Spleen (tissue), 13 donors: ENCODE measurements at regions of chr11 and their contacts with region 1.

Region 1: GRCh38 chr11:75547580-75548058 is 14.4 kb upstream of the SERPINH1 start:
- DNase-seq: no peak
- H3K4me3 ChIP-seq: no peak overlapping the region
- H3K27ac ChIP-seq: no peak overlapping the region
- H3K4me1 ChIP-seq: peaks cover 0 to 17% (median 5%) of the 10 kb centered on the region in 6 donors
- H3K27me3 ChIP-seq: peaks cover 0 to 8% (median 0%) of the 10 kb centered on the region in 7 donors
- CTCF ChIP-seq: peak; percentile 28 to 84 (median 73)
- POLR2A ChIP-seq: no peak

Region 2: GRCh38 chr11:75319035-75319877 is 228.4 kb before region 1 on chr11:
- intact Hi-C with region 1: no loop called
- DNase-seq: no peak
- H3K4me3 ChIP-seq: no peak overlapping the region
- H3K27ac ChIP-seq: peak overlapping the region in 2 of 8 donors; percentile 12 to 38
- H3K4me1 ChIP-seq: peaks cover 2 to 84% (median 35%) of the 10 kb centered on the region in 6 donors
- H3K27me3 ChIP-seq: no peaks in the 10 kb centered on the region
- CTCF ChIP-seq: no peak
- POLR2A ChIP-seq: no peak

Region 3: GRCh38 chr11:75465701-75466531 is 81.7 kb before region 1 on chr11:
- intact Hi-C with region 1: no loop called
- DNase-seq: peak; percentile 79
- H3K4me3 ChIP-seq: no peak overlapping the region
- H3K27ac ChIP-seq: peak overlapping the region; percentile 7 to 89 (median 78)
- H3K4me1 ChIP-seq: peaks cover 24 to 97% (median 66%) of the 10 kb centered on the region in 6 donors
- H3K27me3 ChIP-seq: no peaks in the 10 kb centered on the region
- CTCF ChIP-seq: no peak
- POLR2A ChIP-seq: no peak

Region 4: DNA sequence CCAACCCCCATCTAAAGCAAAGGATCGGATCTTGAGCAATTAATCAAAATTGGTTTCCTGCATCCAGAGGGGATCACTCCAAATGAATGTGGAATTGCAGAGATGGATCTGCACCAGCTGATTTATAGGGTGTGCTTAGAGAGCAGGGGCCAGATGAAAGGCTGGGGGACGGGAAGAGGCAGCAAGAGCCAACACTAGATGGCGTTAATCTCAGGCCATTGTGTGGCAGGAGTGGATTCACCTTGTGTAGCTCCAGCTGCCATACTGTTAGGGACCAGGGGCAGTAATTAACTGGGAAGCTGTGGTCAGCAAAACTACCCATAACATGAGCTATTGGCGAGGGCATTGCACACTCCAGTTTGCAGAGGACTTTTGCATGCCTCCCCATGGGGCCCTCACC is 50.0 kb after region 1 on chr11:
- intact Hi-C with region 1: loop called (anchors 10 kb)
- DNase-seq: no peak
- H3K4me3 ChIP-seq: no peak overlapping the region
- H3K27ac ChIP-seq: no peak overlapping the region
- H3K4me1 ChIP-seq: peaks cover 0 to 22% (median 0%) of the 10 kb centered on the region in 6 donors
- H3K27me3 ChIP-seq: no peaks in the 10 kb centered on the region
- CTCF ChIP-seq: peak in 5 of 11 experiments; percentile 22 to 31 (median 31)
- POLR2A ChIP-seq: no peak

Region 5: DNA sequence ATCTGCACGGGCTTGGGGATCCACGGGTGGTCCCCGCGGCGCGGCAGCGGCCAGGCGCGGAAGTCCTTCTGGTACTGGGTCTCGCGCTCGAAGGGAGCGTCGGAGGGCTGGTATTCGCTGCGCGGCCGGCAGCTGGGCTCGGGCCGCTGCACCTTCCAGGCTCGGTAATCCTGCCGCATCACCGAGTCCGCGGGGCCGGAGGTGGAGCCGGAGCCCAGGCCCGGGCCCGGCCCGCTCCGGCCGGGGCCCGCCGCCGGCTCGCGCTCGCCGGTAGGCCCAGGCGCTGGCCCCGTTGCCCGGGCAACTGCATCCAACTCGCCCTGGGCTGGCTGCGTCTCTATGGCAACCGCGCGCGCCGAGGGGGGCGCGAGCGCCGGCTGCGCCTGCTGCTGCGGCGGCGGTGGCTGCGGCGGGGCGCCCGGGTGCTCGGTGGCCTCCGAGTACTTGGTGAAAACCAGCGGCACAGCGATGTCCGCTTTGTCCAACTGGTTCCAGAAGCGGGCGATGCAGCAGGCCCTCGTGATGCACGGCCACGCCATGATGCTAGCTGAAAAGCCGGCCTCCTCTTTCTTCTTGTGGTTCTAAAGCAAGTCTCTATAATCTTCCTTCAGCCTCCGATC is 120.3 kb after region 1 on chr11:
- intact Hi-C with region 1: no loop called
- DNase-seq: no peak
- H3K4me3 ChIP-seq: peak overlapping the region; percentile 37 to 73 (median 52)
- H3K27ac ChIP-seq: peak overlapping the region in 2 of 8 donors; percentile 8 to 13
- H3K4me1 ChIP-seq: peaks cover 10 to 28% (median 21%) of the 10 kb centered on the region in 6 donors
- H3K27me3 ChIP-seq: peaks cover 0 to 92% (median 46%) of the 10 kb centered on the region in 7 donors
- CTCF ChIP-seq: no peak
- POLR2A ChIP-seq: no peak